Right ventricle myocardium inferior (tissue), 1 donor: ENCODE measurements at regions of chr10 and their contacts with region 1.

Region 1: DNA sequence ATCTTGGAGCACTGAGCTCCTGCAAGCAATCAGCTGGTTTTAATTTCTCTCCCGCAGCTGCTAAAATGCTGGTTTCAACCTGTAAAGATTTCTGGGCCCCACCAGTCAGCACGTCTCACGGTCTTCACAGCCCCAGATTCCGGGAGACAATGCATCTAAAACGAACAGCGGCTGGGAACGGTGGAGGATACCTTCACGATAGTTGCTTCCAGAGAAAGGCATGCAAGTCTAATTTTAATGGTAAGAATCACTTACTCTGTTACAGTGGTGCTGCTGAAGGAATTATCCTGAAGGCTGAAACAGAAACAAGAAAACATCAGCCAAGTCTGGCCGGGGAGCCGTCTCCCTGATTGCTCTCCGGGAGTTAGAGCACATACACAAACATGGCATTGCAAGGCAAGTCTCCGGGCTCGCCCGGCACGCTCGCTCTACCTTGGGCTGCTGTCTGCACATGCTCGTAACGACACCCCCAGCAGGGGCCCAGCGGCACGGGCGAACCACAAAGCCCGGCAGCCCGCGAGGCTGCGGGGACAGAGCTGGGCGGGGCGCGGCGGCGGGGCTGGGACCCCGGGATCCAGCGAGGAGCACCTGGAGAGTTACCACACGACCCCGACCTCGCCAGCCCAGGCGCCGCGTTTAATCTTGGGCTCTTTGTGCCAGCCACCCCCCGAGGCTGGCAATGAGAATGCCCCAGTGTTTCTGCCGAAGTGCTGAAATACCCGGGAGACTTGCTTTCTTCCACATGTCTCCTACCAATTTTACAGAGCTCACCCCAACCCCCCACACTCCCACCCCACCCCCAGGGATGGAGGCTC is at the start of gene FAM13C:
- DNase-seq: peak; percentile 72
- ATAC-seq: peak; percentile 76
- total RNA-seq, gene FAM13C: 7.8 TPM

Region 2: GRCh38 chr10:59240582-59241183 is 121.7 kb before region 1 on chr10:
- intact Hi-C with region 1: loop called (anchors 5 kb)
- DNase-seq: no peak
- ATAC-seq: no peak

Region 3: DNA sequence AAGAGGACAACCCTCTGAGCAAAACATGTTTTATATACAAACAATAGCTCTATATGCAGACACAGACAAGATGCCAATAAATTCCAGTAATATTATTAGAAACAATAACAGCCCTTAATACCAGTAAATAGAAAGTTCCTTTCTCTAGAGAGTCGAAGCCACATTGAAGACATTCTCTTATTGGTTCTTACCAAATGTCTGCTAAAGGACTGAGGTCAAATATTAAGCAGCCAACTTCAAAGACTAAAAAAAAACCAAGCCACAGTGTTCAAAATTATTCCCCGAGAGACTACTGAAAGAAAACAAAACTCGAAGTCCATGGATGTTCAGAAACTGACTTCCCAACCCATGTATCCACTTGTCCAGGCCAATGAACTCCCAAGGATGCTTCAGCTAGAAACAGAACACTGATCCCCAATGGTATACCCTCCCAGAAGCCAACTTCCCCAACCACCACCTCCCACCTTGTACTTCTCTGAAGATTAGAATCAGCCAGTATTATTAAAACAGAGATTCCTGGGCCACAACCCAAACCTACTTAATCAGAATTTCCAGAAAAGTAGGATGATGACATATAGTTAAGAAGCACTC is 51.9 kb before region 1 on chr10:
- intact Hi-C with region 1: loop called (anchors 2 kb)
- DNase-seq: no peak
- ATAC-seq: peak; percentile 69

Region 4: DNA sequence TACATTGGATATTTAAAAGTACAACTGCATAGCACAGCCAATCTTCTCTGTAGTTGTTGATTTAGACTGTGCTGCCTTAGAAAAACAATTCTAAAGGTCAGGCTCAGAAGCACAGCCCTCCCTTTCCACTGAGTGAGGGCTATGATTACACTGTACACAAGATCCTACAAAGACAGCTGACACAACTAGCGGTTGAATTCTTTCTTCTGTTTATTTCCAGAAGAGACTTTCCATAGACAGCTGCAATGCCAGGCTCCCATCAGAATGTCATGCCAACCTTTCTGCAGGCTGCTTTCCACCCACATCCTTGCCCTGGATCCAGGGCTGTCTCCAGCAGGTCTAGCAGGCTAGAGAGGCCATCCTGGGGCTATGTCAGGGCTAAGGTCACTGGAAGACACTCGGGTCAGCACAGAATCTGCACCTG is 39.3 kb before region 1 on chr10:
- intact Hi-C with region 1: loop called (anchors 2 kb)
- DNase-seq: no peak
- ATAC-seq: peak; percentile 59

Region 5: GRCh38 chr10:59580026-59580863 is 217.9 kb after region 1 on chr10:
- intact Hi-C with region 1: loop called (anchors 2 kb)
- DNase-seq: no peak
- ATAC-seq: peak; percentile 32